Dorsolateral prefrontal cortex (tissue), 120 donors: ENCODE measurements at regions of chr6 and their contacts with region 1.

Region 1: GRCh38 chr6:157756708-157757429 is 66.2 kb upstream of the SNX9 start:
- DNase-seq: peak; percentile 80 to 94 (median 92)
- H3K4me3 ChIP-seq: peak overlapping the region in 35 of 59 donors; percentile 1 to 50 (median 26)
- H3K27ac ChIP-seq: peak overlapping the region in 43 of 59 donors; percentile 5 to 81 (median 57)
- H3K27me3 ChIP-seq: no peaks in the 10 kb centered on the region
- CTCF ChIP-seq: peak; percentile 83 to 97 (median 90)

Region 2: DNA sequence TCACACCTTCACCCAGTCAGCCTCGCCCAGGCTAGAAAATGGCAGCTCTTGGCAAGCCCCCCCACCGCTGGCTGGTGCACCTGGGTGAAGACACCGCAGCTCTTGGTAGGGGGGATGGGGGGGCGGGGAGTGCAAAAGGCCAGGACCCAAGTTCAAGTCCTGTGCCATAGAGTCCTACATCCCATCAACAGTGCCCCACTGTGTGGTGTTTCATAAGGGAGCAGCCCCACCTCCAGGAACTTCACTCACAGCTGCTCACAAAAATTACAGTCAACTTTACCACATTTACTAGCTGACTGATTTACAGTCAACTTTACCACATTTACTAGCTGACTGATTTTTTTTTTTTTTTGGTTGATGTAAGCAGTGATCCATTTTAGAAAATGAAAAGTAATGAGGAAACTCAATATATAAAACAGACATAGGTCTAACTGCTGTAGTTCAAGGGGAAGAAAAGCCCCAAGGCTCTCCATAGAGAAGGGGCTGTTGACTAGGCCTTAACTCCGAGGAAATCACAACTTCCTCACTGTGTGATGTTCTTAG is 142.8 kb before region 1 on chr6:
- intact Hi-C with region 1: no loop called
- DNase-seq: no peak
- H3K4me3 ChIP-seq: no peak overlapping the region
- H3K27ac ChIP-seq: peak overlapping the region in 9 of 59 donors; percentile 16 to 66 (median 38)
- H3K27me3 ChIP-seq: no peaks in the 10 kb centered on the region
- CTCF ChIP-seq: peak in 7 of 56 donors; percentile 11 to 30 (median 19)

Region 3: DNA sequence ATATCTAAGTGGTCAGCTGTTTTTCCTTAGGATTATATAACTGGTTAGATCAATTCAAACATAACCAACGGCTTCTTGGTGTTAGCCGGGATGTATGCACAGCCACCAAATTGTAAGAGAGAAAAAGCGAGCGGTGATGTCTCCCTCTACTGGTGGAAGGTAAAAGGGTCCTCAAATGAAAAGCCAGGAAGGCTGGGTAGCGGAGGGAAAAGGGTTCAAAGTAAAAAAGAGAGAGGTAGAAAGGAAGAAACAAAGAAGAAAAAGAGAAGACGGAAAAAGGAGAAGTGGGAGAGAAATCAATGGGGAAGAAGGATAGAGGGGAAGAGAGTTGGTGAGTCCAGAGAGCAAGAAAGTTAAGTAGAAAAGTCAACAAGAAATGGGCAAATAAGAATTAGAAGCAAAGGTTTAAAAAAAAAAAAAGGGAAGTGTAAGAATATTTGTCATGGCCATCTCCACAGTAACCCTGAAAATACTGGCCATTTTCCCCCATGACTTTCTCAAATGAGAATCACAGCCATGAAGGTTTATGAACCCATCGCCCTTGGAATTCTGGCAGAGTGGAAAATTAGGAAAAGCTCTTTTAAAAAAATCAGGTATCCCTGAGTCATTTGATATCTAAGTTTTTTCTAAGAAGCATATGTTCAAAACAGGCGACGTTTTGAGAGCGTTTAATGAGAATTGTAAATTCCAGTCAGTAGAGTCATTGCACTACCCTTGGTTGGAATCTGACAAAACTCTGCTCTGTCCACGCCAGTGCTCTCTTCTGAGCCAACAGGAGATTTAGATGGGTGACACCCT is 89.5 kb before region 1 on chr6:
- intact Hi-C with region 1: loop called in 1 of 2 experiments (anchors 5 kb)
- DNase-seq: peak in 4 of 10 donors; percentile 45 to 75 (median 60)
- H3K4me3 ChIP-seq: no peak overlapping the region
- H3K27ac ChIP-seq: peak overlapping the region in 1 of 59 donors; percentile 4
- H3K27me3 ChIP-seq: no peaks in the 10 kb centered on the region
- CTCF ChIP-seq: peak; percentile 79 to 95 (median 89)

Region 4: GRCh38 chr6:157873735-157874344 is 117.0 kb after region 1 on chr6:
- intact Hi-C with region 1: loop called (anchors 2 to 5 kb)
- DNase-seq: peak; percentile 35 to 80 (median 70)
- H3K4me3 ChIP-seq: no peak overlapping the region
- H3K27ac ChIP-seq: peak overlapping the region in 16 of 59 donors; percentile 1 to 55 (median 26)
- H3K27me3 ChIP-seq: no peaks in the 10 kb centered on the region
- CTCF ChIP-seq: peak; percentile 45 to 88 (median 78)

Region 5: DNA sequence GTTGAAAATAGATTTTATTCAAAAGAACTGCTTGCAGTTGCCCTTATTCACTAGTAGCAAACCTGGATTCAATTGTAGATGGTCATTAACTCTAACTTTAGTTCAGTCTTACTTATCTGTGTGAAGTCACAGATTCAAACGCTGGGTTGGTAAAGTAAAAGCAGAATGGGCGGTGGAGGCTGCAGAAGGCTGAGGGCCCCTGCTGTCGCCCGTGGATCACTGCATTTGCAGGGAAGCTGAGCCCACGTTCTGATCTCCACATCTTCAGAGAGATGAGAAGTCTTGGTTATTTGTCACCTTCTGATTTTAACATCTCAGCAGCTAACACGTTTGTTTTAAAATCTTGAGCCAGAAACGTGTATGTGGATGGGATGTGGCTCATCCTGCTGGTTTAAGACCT is 141.3 kb after region 1 on chr6:
- intact Hi-C with region 1: loop called in 1 of 2 experiments (anchors 5 kb)
- DNase-seq: peak in 9 of 10 donors; percentile 47 to 76 (median 69)
- H3K4me3 ChIP-seq: peak overlapping the region in 1 of 59 donors; percentile 5
- H3K27ac ChIP-seq: peak overlapping the region in 57 of 59 donors; percentile 10 to 85 (median 71)
- H3K27me3 ChIP-seq: no peaks in the 10 kb centered on the region
- CTCF ChIP-seq: peak in 52 of 56 donors; percentile 40 to 81 (median 62)

Region 6: DNA sequence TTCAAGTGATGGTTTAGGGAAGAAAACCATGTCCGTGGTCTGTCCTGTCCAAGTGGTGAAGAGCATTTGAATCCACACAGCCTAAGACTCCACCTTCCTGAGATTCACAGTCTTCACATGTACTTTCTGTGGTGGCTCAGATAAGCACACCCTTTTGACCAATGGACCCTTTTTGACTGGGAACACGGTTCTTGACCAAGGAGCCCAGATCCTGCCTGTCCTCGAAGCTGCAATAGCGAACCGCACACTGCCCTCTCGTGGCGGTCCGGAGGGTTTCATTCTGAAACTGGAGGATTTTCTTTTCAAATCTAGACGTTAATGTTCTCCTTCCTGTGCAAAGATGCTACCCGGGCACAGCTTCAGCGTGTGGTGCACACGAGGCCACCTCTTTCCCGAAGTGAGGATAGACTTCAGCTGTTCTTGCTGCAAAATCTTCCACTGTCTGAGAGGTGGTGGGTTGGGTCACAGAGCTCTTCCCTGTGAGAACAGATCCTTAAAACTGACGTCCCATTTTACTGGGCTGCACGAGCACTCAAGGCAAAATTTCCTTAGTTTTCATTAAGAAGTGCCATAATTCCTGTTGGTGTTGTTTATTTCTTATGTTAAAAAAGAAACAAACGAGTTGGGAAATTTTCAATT is 315.3 kb after region 1 on chr6:
- intact Hi-C with region 1: loop called (anchors 5 kb)
- DNase-seq: peak; percentile 70 to 91 (median 78)
- H3K4me3 ChIP-seq: peak overlapping the region in 1 of 59 donors; percentile 16
- H3K27ac ChIP-seq: peak overlapping the region in 58 of 59 donors; percentile 2 to 90 (median 80)
- H3K27me3 ChIP-seq: no peaks in the 10 kb centered on the region
- CTCF ChIP-seq: peak; percentile 69 to 97 (median 90)